ENCODE measurements at regions of chr5 and their contacts with region 1.

Region 1: GRCh38 chr5:123423278-123424149 is at the start of gene CEP120:
- DNase-seq: peak; percentile 89 to 99 (median 97)
- ATAC-seq: peak; percentile 91 to 98 (median 96)
- H3K4me3 ChIP-seq: peak within 1 kb of the TSS; percentile 78 to 90
- H3K4me3 Mint-ChIP-seq: no peak within 1 kb of the TSS
- H3K27ac ChIP-seq: peak within 1 kb of the TSS; percentile 99
- H3K27ac Mint-ChIP-seq: peak within 1 kb of the TSS in 1 of 2 donors; percentile 99
- H3K4me1 ChIP-seq: peaks cover 16 to 26% of the 10 kb centered on the region in 2 experiments
- H3K4me1 Mint-ChIP-seq: peaks cover 11 to 21% (median 16%) of the 10 kb centered on the region in 3 donors
- H3K27me3 ChIP-seq: no peaks in the 10 kb centered on the region
- H3K27me3 Mint-ChIP-seq: no peaks in the 10 kb centered on the region
- total RNA-seq, gene CEP120: 48.3 to 71.1 (median 62.8) TPM

Region 2: GRCh38 chr5:122816756-122817155 is 606.8 kb before region 1 on chr5:
- CTCF ChIA-PET with region 1: no interaction called
- POLR2A ChIA-PET with region 1: no interaction called
- DNase-seq: no peak
- ATAC-seq: no peak
- H3K4me3 ChIP-seq: no peak overlapping the region
- H3K4me3 Mint-ChIP-seq: no peak overlapping the region
- H3K27ac ChIP-seq: no peak overlapping the region
- H3K27ac Mint-ChIP-seq: no peak overlapping the region
- H3K4me1 ChIP-seq: no peaks in the 10 kb centered on the region
- H3K4me1 Mint-ChIP-seq: no peaks in the 10 kb centered on the region
- H3K27me3 ChIP-seq: no peaks in the 10 kb centered on the region
- H3K27me3 Mint-ChIP-seq: no peaks in the 10 kb centered on the region

Region 3: GRCh38 chr5:123511648-123512605 is 88.4 kb after region 1 on chr5 and contains the start of gene CSNK1G3:
- CTCF ChIA-PET with region 1: interaction called, 8 to 22 read pairs
- POLR2A ChIA-PET with region 1: interaction called, 4 to 11 read pairs
- DNase-seq: peak; percentile 80 to 94 (median 89)
- ATAC-seq: peak; percentile 89 to 94 (median 92)
- H3K4me3 ChIP-seq: peak within 1 kb of the TSS; percentile 82 to 94
- H3K4me3 Mint-ChIP-seq: peak within 1 kb of the TSS; percentile 99
- H3K27ac ChIP-seq: peak within 1 kb of the TSS; percentile 83
- H3K27ac Mint-ChIP-seq: peak within 1 kb of the TSS; percentile 98 to 99
- H3K4me1 ChIP-seq: peaks cover 15 to 32% of the 10 kb centered on the region in 2 experiments
- H3K4me1 Mint-ChIP-seq: peaks cover 45 to 48% (median 46%) of the 10 kb centered on the region in 3 donors
- H3K27me3 ChIP-seq: no peaks in the 10 kb centered on the region
- H3K27me3 Mint-ChIP-seq: peaks cover 0 to 1% of the 10 kb centered on the region in 2 donors
- total RNA-seq, gene CSNK1G3: 59.0 to 73.5 (median 71.9) TPM

Region 4: GRCh38 chr5:123538670-123539459 is 115.4 kb after region 1 on chr5:
- CTCF ChIA-PET with region 1: interaction called in 1 of 2 experiments, 29 read pairs
- POLR2A ChIA-PET with region 1: interaction called in 1 of 2 experiments, 17 read pairs
- DNase-seq: no peak
- ATAC-seq: no peak
- H3K4me3 ChIP-seq: no peak overlapping the region
- H3K4me3 Mint-ChIP-seq: no peak overlapping the region
- H3K27ac ChIP-seq: no peak overlapping the region
- H3K27ac Mint-ChIP-seq: no peak overlapping the region
- H3K4me1 ChIP-seq: peaks cover 2 to 7% of the 10 kb centered on the region in 2 experiments
- H3K4me1 Mint-ChIP-seq: peaks cover 65 to 70% (median 68%) of the 10 kb centered on the region in 3 donors
- H3K27me3 ChIP-seq: no peaks in the 10 kb centered on the region
- H3K27me3 Mint-ChIP-seq: no peaks in the 10 kb centered on the region

Region 5: GRCh38 chr5:123545506-123545905 is 122.0 kb after region 1 on chr5:
- CTCF ChIA-PET with region 1: interaction called, 4 to 29 read pairs
- POLR2A ChIA-PET with region 1: interaction called, 3 to 25 read pairs
- DNase-seq: peak in 20 of 35 experiments; percentile 2 to 52 (median 12)
- ATAC-seq: no peak
- H3K4me3 ChIP-seq: no peak overlapping the region
- H3K4me3 Mint-ChIP-seq: no peak overlapping the region
- H3K27ac ChIP-seq: no peak overlapping the region
- H3K27ac Mint-ChIP-seq: no peak overlapping the region
- H3K4me1 ChIP-seq: peaks cover 12 to 20% of the 10 kb centered on the region in 2 experiments
- H3K4me1 Mint-ChIP-seq: peaks cover 59 to 67% (median 65%) of the 10 kb centered on the region in 3 donors
- H3K27me3 ChIP-seq: no peaks in the 10 kb centered on the region
- H3K27me3 Mint-ChIP-seq: no peaks in the 10 kb centered on the region

Region 6: GRCh38 chr5:123610665-123611405 is 187.3 kb after region 1 on chr5:
- CTCF ChIA-PET with region 1: interaction called, 7 to 38 read pairs
- POLR2A ChIA-PET with region 1: interaction called, 4 to 9 read pairs
- DNase-seq: peak in 12 of 35 experiments; percentile 6 to 78 (median 20)
- ATAC-seq: peak in 3 of 4 experiments; percentile 53 to 73 (median 64)
- H3K4me3 ChIP-seq: no peak overlapping the region
- H3K4me3 Mint-ChIP-seq: no peak overlapping the region
- H3K27ac ChIP-seq: no peak overlapping the region
- H3K27ac Mint-ChIP-seq: peak overlapping the region; percentile 36 to 57
- H3K4me1 ChIP-seq: no peaks in the 10 kb centered on the region
- H3K4me1 Mint-ChIP-seq: peaks cover 0 to 4% (median 4%) of the 10 kb centered on the region in 3 donors
- H3K27me3 ChIP-seq: no peaks in the 10 kb centered on the region
- H3K27me3 Mint-ChIP-seq: no peaks in the 10 kb centered on the region